H1 (cell line): ENCODE measurements at regions of chr16 and their contacts with region 1.

Region 1: GRCh38 chr16:30844671-30845449 is 49.0 kb downstream of the BCL7C start:
- DNase-seq: peak; percentile 13 to 82
- H3K4me3 ChIP-seq: no peak overlapping the region
- H3K27ac ChIP-seq: no peak overlapping the region
- H3K4me1 ChIP-seq: no peaks in the 10 kb centered on the region
- H3K27me3 ChIP-seq: no peaks in the 10 kb centered on the region
- CTCF ChIP-seq: peak; percentile 3 to 90 (median 86)
- EP300 ChIP-seq: no peak
- POLR2A ChIP-seq: no peak
- RAD21 ChIP-seq: peak; percentile 90 to 94

Region 2: DNA sequence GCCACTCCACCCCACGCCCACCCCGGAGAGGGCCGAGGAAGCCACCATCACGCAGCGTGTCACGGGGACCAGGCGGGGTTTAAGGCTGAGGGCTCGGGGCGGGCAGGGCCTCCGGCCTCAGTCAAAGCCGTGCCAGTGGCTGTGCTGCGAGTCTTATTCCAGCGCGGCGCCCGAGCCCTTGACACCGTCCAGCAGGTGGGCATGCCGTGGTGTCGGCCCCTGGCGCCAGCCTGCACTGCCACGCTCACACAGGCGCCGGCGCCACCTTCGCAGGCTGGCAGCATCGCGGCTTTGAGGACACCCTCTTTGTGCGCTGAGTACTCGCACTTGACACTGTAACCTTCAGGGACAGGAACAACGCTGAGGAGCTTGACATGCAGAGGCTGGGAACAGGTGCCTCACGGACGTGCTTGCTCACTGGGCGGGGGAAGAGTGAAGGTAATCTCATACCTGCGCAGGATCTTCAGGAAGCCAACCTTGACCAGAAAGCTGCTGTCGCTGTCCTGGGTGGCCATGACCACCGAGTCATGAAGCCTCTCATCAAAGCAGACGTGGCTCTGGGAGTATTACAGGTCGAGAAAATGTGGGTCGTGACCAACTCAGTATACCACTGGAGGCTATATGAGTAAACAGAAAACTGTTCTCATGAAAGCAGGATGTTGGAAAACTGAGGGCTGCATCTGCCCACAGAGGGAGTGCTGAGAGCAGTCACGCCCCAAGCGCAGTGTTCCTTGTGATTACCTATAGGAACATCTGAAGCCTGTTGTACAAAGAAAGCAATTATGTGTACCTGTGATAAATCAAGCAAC is 23.7 kb before region 1 on chr16:
- CTCF ChIA-PET with region 1: interaction called, 18 read pairs
- POLR2A ChIA-PET with region 1: no interaction called
- DNase-seq: no peak
- H3K4me3 ChIP-seq: no peak overlapping the region
- H3K27ac ChIP-seq: no peak overlapping the region
- H3K4me1 ChIP-seq: no peaks in the 10 kb centered on the region
- H3K27me3 ChIP-seq: no peaks in the 10 kb centered on the region
- CTCF ChIP-seq: no peak
- EP300 ChIP-seq: no peak
- POLR2A ChIP-seq: no peak
- RAD21 ChIP-seq: no peak

Region 3: DNA sequence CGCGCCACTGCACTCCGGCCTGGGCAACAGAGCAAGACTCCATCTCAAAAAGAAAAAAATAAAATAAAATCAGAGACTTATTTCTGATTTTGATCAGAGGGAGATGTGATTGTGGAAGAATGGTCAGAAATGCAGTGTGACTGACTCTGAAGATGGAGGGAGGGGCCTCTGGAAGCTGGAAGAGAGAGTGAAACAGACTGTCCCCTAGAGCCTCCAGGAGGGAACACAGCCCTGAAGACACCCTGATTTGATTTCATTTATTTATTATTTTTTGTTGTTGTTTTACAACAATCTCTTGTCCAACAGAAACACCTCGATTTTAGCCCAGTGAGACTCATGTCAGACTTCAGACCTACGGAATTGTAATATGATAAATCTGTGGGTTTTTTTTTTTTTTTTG is 22.9 kb after region 1 on chr16:
- CTCF ChIA-PET with region 1: interaction called, 49 read pairs
- POLR2A ChIA-PET with region 1: no interaction called
- DNase-seq: no peak
- H3K4me3 ChIP-seq: no peak overlapping the region
- H3K27ac ChIP-seq: no peak overlapping the region
- H3K4me1 ChIP-seq: no peaks in the 10 kb centered on the region
- H3K27me3 ChIP-seq: peaks cover 0 to 9% (median 5%) of the 10 kb centered on the region in 4 experiments; a peak in 5 of 7 replicates
- CTCF ChIP-seq: peak in 2 of 3 experiments; percentile 23 to 40; a peak in 2 of 4 replicates
- EP300 ChIP-seq: no peak
- POLR2A ChIP-seq: no peak
- RAD21 ChIP-seq: peak; percentile 28 to 29; a peak in 2 of 4 replicates

Region 4: GRCh38 chr16:30893744-30894539 is 49.1 kb after region 1 on chr16 and contains the start of gene BCL7C:
- CTCF ChIA-PET with region 1: interaction called, 25 read pairs
- POLR2A ChIA-PET with region 1: no interaction called
- DNase-seq: peak in 1 of 2 experiments; percentile 93
- H3K4me3 ChIP-seq: peak within 1 kb of the TSS; percentile 60 to 73 (median 67)
- H3K27ac ChIP-seq: no peak within 1 kb of the TSS; the same call in 1 of the 2 replicates
- H3K4me1 ChIP-seq: peaks cover 4 to 13% (median 12%) of the 10 kb centered on the region in 4 experiments
- H3K27me3 ChIP-seq: peaks cover 0 to 13% (median 7%) of the 10 kb centered on the region in 4 experiments; a peak in 5 of 7 replicates
- CTCF ChIP-seq: peak; percentile 53 to 63 (median 57)
- EP300 ChIP-seq: no peak
- POLR2A ChIP-seq: peak in 1 of 2 experiments; percentile 43; a peak in 2 of 3 replicates
- RAD21 ChIP-seq: peak in 1 of 2 experiments; percentile 45; a peak in 2 of 4 replicates
- total RNA-seq, gene BCL7C: 16.5 and 17.2 TPM in 2 replicates

Region 5: DNA sequence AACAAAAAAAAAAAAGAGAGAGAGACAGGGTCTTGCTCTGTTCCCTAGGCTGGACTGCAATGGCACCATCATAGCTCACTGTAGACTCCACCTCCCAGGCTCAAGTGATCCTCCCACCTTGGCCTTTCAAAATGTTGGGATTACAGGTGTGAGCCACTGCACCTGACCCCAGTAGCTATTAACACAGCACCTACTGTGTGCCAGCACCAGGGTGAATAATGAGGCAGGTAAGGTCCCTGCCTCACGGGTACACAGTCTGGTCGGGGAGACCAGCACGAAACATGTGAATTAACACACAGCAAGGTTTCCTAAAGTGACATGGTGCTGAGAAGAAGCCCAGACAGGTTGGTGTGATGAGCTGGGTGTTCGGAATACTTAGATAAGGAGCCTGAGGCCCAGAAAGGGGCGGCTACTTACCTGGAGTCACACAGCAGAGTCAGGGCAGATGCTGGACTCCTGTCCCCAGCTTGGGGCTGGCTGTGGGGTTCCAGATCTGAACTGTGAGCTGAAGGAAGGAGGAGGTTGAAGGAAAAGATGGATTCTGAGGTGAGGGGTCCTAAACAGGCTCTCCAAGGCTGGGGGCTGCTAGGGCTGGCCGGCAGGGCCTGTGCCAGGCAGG is 68.0 kb after region 1 on chr16:
- CTCF ChIA-PET with region 1: interaction called, 63 read pairs
- POLR2A ChIA-PET with region 1: interaction called, 4 read pairs
- DNase-seq: no peak
- H3K4me3 ChIP-seq: no peak overlapping the region
- H3K27ac ChIP-seq: no peak overlapping the region
- H3K4me1 ChIP-seq: peaks cover 0 to 9% (median 7%) of the 10 kb centered on the region in 4 experiments; a peak in 6 of 7 replicates
- H3K27me3 ChIP-seq: no peaks in the 10 kb centered on the region
- CTCF ChIP-seq: no peak
- EP300 ChIP-seq: no peak
- POLR2A ChIP-seq: no peak
- RAD21 ChIP-seq: no peak

Region 6: GRCh38 chr16:30941600-30942425 is 97.0 kb after region 1 on chr16:
- CTCF ChIA-PET with region 1: interaction called, 20 read pairs
- POLR2A ChIA-PET with region 1: no interaction called
- DNase-seq: peak in 1 of 2 experiments; percentile 87
- H3K4me3 ChIP-seq: 0 out of 8 replicates have a peak overlapping the region, but pooled peaks of 2 of the 4 experiments have one; percentile 1 to 10
- H3K27ac ChIP-seq: no peak overlapping the region
- H3K4me1 ChIP-seq: peaks cover 0 to 13% (median 8%) of the 10 kb centered on the region in 4 experiments; a peak in 6 of 7 replicates
- H3K27me3 ChIP-seq: no peaks in the 10 kb centered on the region
- CTCF ChIP-seq: peak; percentile 84 to 97 (median 93)
- EP300 ChIP-seq: no peak; a peak in 1 of 3 replicates
- POLR2A ChIP-seq: no peak
- RAD21 ChIP-seq: peak; percentile 74 to 83